Activated B cell treated with CpG ODN at 0.5 μM for 24 hours (primary cell): ENCODE measurements at regions of chr1 and their contacts with region 1.

Region 1: GRCh38 chr1:108897865-108898720 is 21.3 kb downstream of the GPSM2 start:
- DNase-seq: no peak
- ATAC-seq: peak; percentile 66
- H3K4me3 Mint-ChIP-seq: no peak overlapping the region
- H3K27ac Mint-ChIP-seq: no peak overlapping the region
- H3K4me1 Mint-ChIP-seq: no peaks in the 10 kb centered on the region
- H3K27me3 Mint-ChIP-seq: no peaks in the 10 kb centered on the region
- CTCF ChIP-seq: peak; percentile 36

Region 2: GRCh38 chr1:108512239-108512981 is 385.7 kb before region 1 on chr1:
- CTCF ChIA-PET with region 1: interaction called, 12 read pairs
- POLR2A ChIA-PET with region 1: no interaction called
- intact Hi-C with region 1: loop called (anchors 1 kb)
- DNase-seq: no peak
- ATAC-seq: peak; percentile 85
- H3K4me3 Mint-ChIP-seq: no peak overlapping the region
- H3K27ac Mint-ChIP-seq: no peak overlapping the region
- H3K4me1 Mint-ChIP-seq: no peaks in the 10 kb centered on the region
- H3K27me3 Mint-ChIP-seq: no peaks in the 10 kb centered on the region
- CTCF ChIP-seq: peak; percentile 95

Region 3: DNA sequence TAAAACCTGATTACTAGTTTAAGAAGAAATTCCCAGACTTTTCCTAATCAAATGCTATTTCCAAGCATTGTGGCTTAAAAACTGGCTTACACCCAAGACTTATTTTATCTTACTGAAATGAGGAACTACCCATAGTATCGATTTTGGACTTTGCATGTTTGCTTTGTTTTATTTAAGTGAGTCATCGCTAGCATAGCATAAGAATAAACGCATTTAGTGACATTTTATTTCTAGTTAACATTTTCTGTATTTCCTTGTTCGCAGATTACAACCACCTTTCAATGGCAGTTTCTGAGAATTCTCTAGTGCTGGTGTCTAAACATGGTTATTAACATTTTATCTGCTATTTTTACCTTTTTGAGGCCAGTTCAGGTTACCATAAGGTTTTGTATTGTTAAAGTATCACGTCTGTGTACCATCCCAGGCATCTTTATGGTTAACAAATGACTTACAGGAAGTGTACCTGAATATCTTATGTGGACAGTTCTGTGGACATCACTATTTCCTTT is 313.7 kb before region 1 on chr1:
- CTCF ChIA-PET with region 1: no interaction called
- POLR2A ChIA-PET with region 1: no interaction called
- intact Hi-C with region 1: no loop called
- DNase-seq: no peak
- ATAC-seq: no peak
- H3K4me3 Mint-ChIP-seq: no peak overlapping the region
- H3K27ac Mint-ChIP-seq: peak overlapping the region; percentile 33
- H3K4me1 Mint-ChIP-seq: peaks cover 33% of the 10 kb centered on the region
- H3K27me3 Mint-ChIP-seq: no peaks in the 10 kb centered on the region
- CTCF ChIP-seq: no peak

Region 4: DNA sequence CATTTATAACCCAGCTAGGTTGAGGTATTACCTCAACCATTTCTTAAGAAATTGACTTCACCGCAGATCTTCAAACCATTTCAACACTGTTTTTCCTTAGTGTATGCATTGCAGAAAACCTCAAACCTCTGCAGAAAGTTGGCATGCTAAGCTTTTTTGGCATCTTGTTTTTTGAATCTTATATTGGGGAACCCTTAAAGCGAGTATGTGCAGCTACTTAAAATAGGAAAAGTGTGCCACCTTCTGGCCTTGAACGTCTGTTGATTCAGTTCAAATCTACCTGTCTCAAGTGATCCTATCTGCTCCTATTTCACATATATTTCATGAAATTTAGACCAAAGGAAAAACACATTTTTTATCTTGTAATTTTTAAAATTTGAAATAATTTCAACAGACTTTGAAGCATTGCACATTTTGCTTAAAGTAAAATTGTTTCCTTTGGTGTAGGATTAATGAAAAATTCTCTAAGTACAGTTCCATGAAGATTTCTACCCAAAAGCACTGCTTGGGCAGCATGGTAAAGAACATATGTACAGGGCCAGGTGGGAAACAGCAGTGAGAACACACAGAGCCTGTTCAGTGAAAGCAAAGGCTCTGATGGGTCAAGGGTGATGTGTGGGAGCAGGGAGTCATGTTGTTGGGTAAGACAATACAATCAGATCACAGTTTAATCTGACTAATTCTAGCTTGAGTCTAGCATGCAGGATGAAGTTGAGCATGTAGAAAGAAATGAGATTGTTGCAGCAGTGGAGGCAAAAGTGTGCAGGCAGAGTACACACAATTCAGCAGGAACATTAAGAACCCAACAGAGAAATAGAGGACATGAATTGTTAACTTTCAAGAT is 254.4 kb before region 1 on chr1:
- CTCF ChIA-PET with region 1: no interaction called
- POLR2A ChIA-PET with region 1: no interaction called
- intact Hi-C with region 1: loop called (anchors 1 kb)
- DNase-seq: no peak
- ATAC-seq: peak; percentile 57
- H3K4me3 Mint-ChIP-seq: no peak overlapping the region
- H3K27ac Mint-ChIP-seq: no peak overlapping the region
- H3K4me1 Mint-ChIP-seq: peaks cover 19% of the 10 kb centered on the region
- H3K27me3 Mint-ChIP-seq: no peaks in the 10 kb centered on the region
- CTCF ChIP-seq: no peak

Region 5: DNA sequence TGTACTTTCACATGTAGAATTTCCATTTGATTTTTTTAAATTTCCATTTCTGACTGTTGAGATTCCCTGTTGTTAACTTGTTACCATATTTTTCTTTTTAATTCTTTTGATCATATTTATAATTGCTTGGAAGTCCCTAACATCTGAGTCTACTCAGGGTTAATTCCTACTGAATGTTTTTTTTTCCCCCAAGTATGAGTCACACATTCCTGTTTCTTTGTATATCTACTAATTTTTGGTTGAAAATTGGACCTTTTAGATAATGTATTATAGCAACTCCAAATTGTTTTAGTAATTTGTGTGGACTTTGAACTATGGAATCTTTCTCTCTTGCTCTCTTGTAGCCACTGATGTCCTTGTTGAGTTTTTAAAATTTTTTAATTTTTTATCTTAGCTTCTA is 97.0 kb before region 1 on chr1:
- CTCF ChIA-PET with region 1: no interaction called
- POLR2A ChIA-PET with region 1: no interaction called
- intact Hi-C with region 1: loop called (anchors 5 kb)
- DNase-seq: no peak
- ATAC-seq: no peak
- H3K4me3 Mint-ChIP-seq: no peak overlapping the region
- H3K27ac Mint-ChIP-seq: no peak overlapping the region
- H3K4me1 Mint-ChIP-seq: no peaks in the 10 kb centered on the region
- H3K27me3 Mint-ChIP-seq: no peaks in the 10 kb centered on the region
- CTCF ChIP-seq: no peak

Region 6: DNA sequence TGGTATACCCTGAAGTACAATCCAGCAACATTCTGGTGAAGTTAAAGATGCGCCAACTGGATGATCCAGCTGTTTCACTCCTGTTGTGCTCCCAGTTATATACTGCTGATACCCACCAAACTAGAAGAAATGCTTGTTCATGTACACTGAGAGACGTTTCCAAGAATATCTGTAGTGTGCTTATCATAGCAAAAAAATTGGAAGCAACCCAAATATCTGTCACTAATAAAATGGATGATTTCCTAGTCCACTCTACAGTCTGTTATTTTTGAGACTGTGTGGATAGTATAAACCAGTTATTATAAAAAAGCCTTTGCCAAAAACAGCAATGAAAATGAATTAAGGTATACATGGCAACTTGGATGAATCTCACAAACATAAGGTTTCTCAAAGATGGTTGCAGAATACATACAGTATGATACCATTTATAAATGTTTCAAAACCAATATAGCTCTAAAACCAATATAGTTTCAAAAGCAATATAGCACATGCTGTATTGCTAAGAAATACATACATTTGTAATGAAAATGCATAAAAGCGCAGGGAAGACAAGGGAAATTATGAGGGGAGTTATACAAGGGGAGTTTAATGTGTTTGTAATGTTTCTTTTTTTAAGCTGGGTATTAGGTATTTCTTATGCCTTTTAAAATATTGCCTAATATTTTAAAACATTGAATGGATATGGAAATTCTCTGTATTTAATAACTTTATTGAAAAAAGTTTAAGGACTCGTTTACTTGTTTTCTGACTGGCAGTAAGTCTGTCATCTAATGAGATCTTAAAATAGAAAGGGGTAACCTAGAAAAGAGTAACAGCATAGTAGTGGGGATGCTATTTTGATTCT is 15.2 kb after region 1 on chr1:
- CTCF ChIA-PET with region 1: no interaction called
- POLR2A ChIA-PET with region 1: no interaction called
- intact Hi-C with region 1: no loop called
- DNase-seq: no peak
- ATAC-seq: no peak
- H3K4me3 Mint-ChIP-seq: no peak overlapping the region
- H3K27ac Mint-ChIP-seq: no peak overlapping the region
- H3K4me1 Mint-ChIP-seq: no peaks in the 10 kb centered on the region
- H3K27me3 Mint-ChIP-seq: no peaks in the 10 kb centered on the region
- CTCF ChIP-seq: no peak

Region 7: GRCh38 chr1:108947871-108948525 is 49.9 kb after region 1 on chr1:
- CTCF ChIA-PET with region 1: no interaction called
- POLR2A ChIA-PET with region 1: no interaction called
- intact Hi-C with region 1: no loop called
- DNase-seq: no peak
- ATAC-seq: no peak
- H3K4me3 Mint-ChIP-seq: no peak overlapping the region
- H3K27ac Mint-ChIP-seq: peak overlapping the region; percentile 10
- H3K4me1 Mint-ChIP-seq: peaks cover 7% of the 10 kb centered on the region
- H3K27me3 Mint-ChIP-seq: no peaks in the 10 kb centered on the region
- CTCF ChIP-seq: no peak